Mammary epithelial cell (primary cell): ENCODE measurements at regions of chr14 and their contacts with region 1.

Region 1: GRCh38 chr14:80850197-80850814 is 91.2 kb downstream of the CEP128 start:
- DNase-seq: no peak
- H3K4me3 ChIP-seq: no peak overlapping the region
- H3K27ac ChIP-seq: no peak overlapping the region
- H3K4me1 ChIP-seq: no peaks in the 10 kb centered on the region
- H3K27me3 ChIP-seq: no peaks in the 10 kb centered on the region
- CTCF ChIP-seq: peak; percentile 43 to 52

Region 2: GRCh38 chr14:78959674-78960264 is 1890.5 kb before region 1 on chr14:
- CTCF ChIA-PET with region 1: no interaction called
- dilution Hi-C with region 1: no loop called
- in situ Hi-C with region 1: loop called (anchors 25 kb)
- intact Hi-C with region 1: loop called (anchors 2 kb)
- DNase-seq: peak; percentile 56
- H3K4me3 ChIP-seq: no peak overlapping the region
- H3K27ac ChIP-seq: no peak overlapping the region
- H3K4me1 ChIP-seq: no peaks in the 10 kb centered on the region
- H3K27me3 ChIP-seq: no peaks in the 10 kb centered on the region
- CTCF ChIP-seq: peak; percentile 85 to 89

Region 3: DNA sequence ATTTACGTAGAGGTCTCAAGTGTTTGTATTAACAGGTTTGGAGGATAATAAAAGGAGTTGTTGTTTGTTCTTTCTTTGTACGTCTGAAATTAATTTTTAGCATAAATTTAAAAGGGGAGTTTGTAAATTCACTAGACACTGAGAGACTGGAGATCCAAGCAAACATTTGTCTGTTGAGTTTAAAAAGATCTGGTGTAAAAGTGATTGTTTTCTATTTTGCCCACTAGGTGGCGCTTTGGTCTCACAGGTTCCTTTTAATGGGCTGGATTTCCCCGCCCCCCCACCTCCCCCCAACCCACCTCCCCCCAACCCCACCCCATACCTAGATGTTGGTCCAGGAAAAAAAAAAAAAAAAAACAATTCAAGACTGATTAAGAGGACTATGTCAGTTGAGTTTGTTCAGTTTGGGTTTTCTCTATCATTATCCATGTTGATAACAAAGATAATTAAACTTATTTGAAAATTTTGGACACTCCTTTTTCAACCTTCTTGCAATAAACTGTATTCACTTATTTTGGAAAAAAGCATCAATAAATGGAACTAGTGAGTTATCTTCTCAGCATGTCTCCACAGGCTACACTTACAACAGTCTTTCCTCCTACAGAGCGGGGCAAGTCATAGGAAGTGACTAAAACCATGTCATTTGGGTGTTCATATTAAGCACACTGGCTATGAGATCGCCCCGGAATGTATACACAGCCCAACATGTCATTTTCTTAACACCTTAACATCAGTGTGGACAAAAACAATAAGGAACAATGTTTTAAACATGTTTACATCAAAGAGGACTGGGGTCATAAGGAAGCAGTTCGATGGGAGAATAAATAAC is 1839.0 kb before region 1 on chr14:
- CTCF ChIA-PET with region 1: no interaction called
- dilution Hi-C with region 1: no loop called
- in situ Hi-C with region 1: no loop called
- intact Hi-C with region 1: loop called (anchors 5 kb)
- DNase-seq: peak; percentile 89
- H3K4me3 ChIP-seq: no peak overlapping the region
- H3K27ac ChIP-seq: peak overlapping the region; percentile 78
- H3K4me1 ChIP-seq: peaks cover 12% of the 10 kb centered on the region
- H3K27me3 ChIP-seq: no peaks in the 10 kb centered on the region
- CTCF ChIP-seq: peak; percentile 22 to 48

Region 4: DNA sequence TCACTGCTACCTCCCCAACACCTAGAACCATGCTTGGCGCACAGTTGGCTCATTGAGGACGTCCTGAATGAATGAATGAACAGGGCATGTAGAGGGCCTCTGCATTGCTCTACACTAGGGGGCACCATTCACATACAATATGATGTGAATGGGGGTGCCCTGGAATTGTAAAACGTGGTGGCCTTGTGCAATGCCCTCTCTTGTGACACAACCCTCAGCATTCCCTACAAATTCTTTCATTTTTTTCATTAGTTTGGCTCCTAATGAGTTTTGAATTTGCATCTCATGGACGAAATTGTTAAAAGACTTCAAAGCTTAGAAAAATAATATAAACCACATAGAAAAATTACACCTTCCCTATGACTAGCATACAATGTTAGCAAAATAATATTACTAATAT is 636.7 kb before region 1 on chr14:
- CTCF ChIA-PET with region 1: no interaction called
- dilution Hi-C with region 1: no loop called
- in situ Hi-C with region 1: loop called in 1 of 2 experiments (anchors 25 kb)
- intact Hi-C with region 1: loop called (anchors 1 kb)
- DNase-seq: peak; percentile 50
- H3K4me3 ChIP-seq: no peak overlapping the region
- H3K27ac ChIP-seq: no peak overlapping the region
- H3K4me1 ChIP-seq: no peaks in the 10 kb centered on the region
- H3K27me3 ChIP-seq: peaks cover 2% of the 10 kb centered on the region
- CTCF ChIP-seq: peak; percentile 81 to 82

Region 5: DNA sequence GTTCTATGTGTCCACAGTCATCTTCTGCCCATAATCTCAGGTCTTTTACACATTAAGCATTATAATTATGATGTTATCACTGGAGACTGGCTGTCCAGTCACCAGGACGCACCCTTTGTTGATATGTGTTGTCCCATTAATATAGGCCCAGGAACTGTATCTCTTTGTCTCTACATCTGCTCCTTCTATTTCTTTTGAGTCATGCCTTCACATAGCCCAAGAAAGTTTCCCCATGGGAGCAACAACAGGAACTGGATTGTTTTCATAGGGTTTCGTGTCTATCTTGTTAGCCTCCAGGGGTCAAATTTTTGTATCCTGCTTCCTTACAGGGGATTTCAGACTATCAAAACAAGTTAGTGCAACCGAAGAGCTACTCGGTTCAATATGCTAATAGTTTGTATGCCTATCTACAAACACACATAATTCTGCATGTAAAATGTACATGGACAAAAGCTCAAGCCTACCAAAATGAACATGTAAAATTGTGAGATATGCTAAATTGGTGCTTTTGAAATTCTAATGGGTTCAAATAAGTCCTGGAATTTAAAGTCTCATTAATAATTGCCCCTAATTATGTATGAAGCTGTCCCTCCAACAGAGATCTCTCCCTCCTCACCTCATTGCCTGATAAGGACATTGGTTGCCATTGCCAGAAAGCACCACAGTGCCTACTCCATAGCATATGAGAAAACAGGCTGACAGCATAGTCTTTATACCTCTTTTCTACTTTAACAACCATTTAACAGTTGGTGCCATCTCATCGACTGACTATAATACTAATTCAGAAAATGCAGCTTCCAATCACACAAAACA is 539.2 kb before region 1 on chr14:
- CTCF ChIA-PET with region 1: no interaction called
- dilution Hi-C with region 1: no loop called
- in situ Hi-C with region 1: no loop called
- intact Hi-C with region 1: no loop called
- DNase-seq: no peak
- H3K4me3 ChIP-seq: no peak overlapping the region
- H3K27ac ChIP-seq: no peak overlapping the region
- H3K4me1 ChIP-seq: no peaks in the 10 kb centered on the region
- H3K27me3 ChIP-seq: no peaks in the 10 kb centered on the region
- CTCF ChIP-seq: no peak

Region 6: DNA sequence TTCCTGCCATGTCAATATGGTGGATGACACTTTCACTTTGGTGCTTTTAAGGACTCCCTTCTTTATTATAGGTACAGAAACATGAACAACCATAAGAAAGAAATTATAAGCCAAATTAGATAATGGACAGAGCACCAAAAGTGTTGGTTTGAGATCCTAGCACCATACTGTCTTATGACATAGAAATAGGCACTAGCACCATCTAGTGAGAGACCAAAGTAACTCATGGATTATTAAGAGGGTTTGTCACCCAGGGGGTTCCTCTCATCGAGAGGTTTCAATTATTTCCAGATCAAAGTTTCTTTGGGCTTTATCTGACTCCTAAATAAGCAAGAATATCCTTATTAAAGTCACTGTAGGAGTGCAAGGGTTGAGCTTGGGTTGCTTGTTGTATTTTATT is 486.0 kb before region 1 on chr14:
- CTCF ChIA-PET with region 1: no interaction called
- dilution Hi-C with region 1: no loop called
- in situ Hi-C with region 1: no loop called
- intact Hi-C with region 1: loop called (anchors 10 kb)
- DNase-seq: no peak
- H3K4me3 ChIP-seq: no peak overlapping the region
- H3K27ac ChIP-seq: no peak overlapping the region
- H3K4me1 ChIP-seq: no peaks in the 10 kb centered on the region
- H3K27me3 ChIP-seq: no peaks in the 10 kb centered on the region
- CTCF ChIP-seq: peak; percentile 31 to 50

Region 7: GRCh38 chr14:80726211-80726610 is 124.1 kb before region 1 on chr14:
- CTCF ChIA-PET with region 1: no interaction called
- dilution Hi-C with region 1: no loop called
- in situ Hi-C with region 1: no loop called
- intact Hi-C with region 1: no loop called
- DNase-seq: no peak
- H3K4me3 ChIP-seq: no peak overlapping the region
- H3K27ac ChIP-seq: no peak overlapping the region
- H3K4me1 ChIP-seq: peaks cover 6% of the 10 kb centered on the region
- H3K27me3 ChIP-seq: no peaks in the 10 kb centered on the region
- CTCF ChIP-seq: no peak

Region 8: DNA sequence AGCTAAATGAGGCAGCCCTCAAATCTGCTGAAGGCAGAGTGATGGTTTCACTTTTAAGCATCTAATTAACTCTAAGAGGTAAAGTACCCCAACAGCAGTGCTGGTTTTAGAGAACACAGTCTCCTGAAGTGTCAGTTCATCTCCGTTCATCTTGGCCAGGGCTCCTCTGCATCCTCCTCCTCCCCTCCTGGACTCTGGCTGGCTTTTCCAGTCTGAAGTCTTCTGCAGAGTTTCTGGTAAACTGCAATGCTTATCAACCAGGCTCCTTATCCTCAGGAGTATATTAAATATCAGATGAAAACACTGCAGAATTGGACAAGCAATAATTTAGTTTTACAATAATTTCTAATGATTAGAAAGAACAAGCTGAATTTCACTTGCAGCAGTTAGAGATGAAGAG is 255.1 kb after region 1 on chr14:
- CTCF ChIA-PET with region 1: no interaction called
- dilution Hi-C with region 1: no loop called
- in situ Hi-C with region 1: no loop called
- intact Hi-C with region 1: no loop called
- DNase-seq: no peak
- H3K4me3 ChIP-seq: no peak overlapping the region
- H3K27ac ChIP-seq: no peak overlapping the region
- H3K4me1 ChIP-seq: no peaks in the 10 kb centered on the region
- H3K27me3 ChIP-seq: no peaks in the 10 kb centered on the region
- CTCF ChIP-seq: no peak